ENCODE measurements at regions of chr7 and their contacts with region 1.

Region 1: GRCh38 chr7:101363734-101364374 is 1.2 kb downstream of the COL26A1 start:
- DNase-seq: peak; percentile 39 to 85 (median 60)
- ATAC-seq: peak; percentile 90
- H3K4me3 ChIP-seq: peak overlapping the region; percentile 48
- H3K4me3 Mint-ChIP-seq: peak overlapping the region; percentile 60
- H3K27ac ChIP-seq: no peak overlapping the region
- H3K27ac Mint-ChIP-seq: no peak overlapping the region
- H3K4me1 ChIP-seq: peaks cover 14% of the 10 kb centered on the region
- H3K4me1 Mint-ChIP-seq: no peaks in the 10 kb centered on the region
- H3K27me3 ChIP-seq: peaks cover 12 to 13% of the 10 kb centered on the region in 2 experiments
- H3K27me3 Mint-ChIP-seq: peaks cover 42% of the 10 kb centered on the region
- CTCF ChIP-seq: peak; percentile 90

Region 2: GRCh38 chr7:101308245-101309085 is 55.4 kb before region 1 on chr7:
- CTCF ChIA-PET with region 1: no interaction called
- POLR2A ChIA-PET with region 1: no interaction called
- intact Hi-C with region 1: loop called in 1 of 2 experiments (anchors 10 kb)
- DNase-seq: peak in 7 of 14 experiments; percentile 4 to 40 (median 9)
- ATAC-seq: peak; percentile 39
- H3K4me3 ChIP-seq: peak overlapping the region; percentile 32
- H3K4me3 Mint-ChIP-seq: peak overlapping the region; percentile 84
- H3K27ac ChIP-seq: no peak overlapping the region
- H3K27ac Mint-ChIP-seq: no peak overlapping the region
- H3K4me1 ChIP-seq: peaks cover 14% of the 10 kb centered on the region
- H3K4me1 Mint-ChIP-seq: peaks cover 6% of the 10 kb centered on the region
- H3K27me3 ChIP-seq: peaks cover 44% of the 10 kb centered on the region in 2 experiments
- H3K27me3 Mint-ChIP-seq: peaks cover 54% of the 10 kb centered on the region
- CTCF ChIP-seq: no peak

Region 3: GRCh38 chr7:101321491-101322401 is 42.1 kb before region 1 on chr7 and contains the start of gene IFT22:
- CTCF ChIA-PET with region 1: no interaction called
- POLR2A ChIA-PET with region 1: no interaction called
- intact Hi-C with region 1: no loop called
- DNase-seq: peak; percentile 62 to 91 (median 81)
- ATAC-seq: peak; percentile 91
- H3K4me3 ChIP-seq: peak within 1 kb of the TSS; percentile 71
- H3K4me3 Mint-ChIP-seq: peak within 1 kb of the TSS; percentile 92
- H3K27ac ChIP-seq: peak within 1 kb of the TSS in 1 of 2 donors; percentile 58
- H3K27ac Mint-ChIP-seq: peak within 1 kb of the TSS; percentile 76
- H3K4me1 ChIP-seq: peaks cover 17% of the 10 kb centered on the region
- H3K4me1 Mint-ChIP-seq: peaks cover 18% of the 10 kb centered on the region
- H3K27me3 ChIP-seq: no peaks in the 10 kb centered on the region
- H3K27me3 Mint-ChIP-seq: no peaks in the 10 kb centered on the region
- CTCF ChIP-seq: no peak
- total RNA-seq, gene IFT22: 2.7 to 3.3 TPM

Region 4: DNA sequence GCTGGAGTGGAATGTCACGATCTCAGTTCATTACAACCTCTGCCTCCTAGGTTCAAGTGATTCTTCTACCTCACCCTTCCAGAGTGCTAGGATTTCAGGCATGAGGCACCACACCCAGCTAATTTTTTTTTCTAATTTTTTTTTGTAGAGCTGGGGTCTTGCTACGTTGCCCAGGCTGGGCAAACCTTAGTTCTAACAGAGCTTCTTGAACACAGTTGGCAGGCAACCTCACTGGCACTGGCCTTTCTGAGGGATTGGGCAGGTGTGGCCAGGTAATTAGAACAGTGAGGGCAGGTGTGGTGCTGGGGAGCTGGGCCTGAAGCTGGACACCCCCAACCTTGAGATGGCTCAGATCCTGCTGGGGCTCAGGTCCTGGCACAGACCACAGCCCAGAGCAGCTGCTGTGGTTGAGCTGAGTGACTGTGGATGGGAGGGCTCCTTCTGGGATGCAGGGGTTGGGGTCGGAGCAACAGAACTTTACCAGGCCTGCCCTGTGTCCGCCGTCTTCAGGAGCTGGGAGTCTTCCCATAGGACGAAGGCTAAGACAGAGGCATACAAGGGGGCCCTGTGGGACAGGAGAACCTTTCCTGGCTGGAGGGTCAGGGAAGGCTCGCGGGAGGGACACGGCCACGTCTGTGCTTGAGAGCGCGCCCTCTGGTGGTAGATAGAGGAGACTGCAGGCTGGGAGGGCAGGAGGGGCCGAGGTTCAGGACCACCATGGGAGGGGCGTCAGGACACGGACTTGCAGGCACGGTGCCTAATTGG is 47.1 kb after region 1 on chr7:
- CTCF ChIA-PET with region 1: no interaction called
- POLR2A ChIA-PET with region 1: no interaction called
- intact Hi-C with region 1: loop called (anchors 1 kb)
- DNase-seq: peak; percentile 5 to 64 (median 21)
- ATAC-seq: no peak
- H3K4me3 ChIP-seq: no peak overlapping the region
- H3K4me3 Mint-ChIP-seq: no peak overlapping the region
- H3K27ac ChIP-seq: no peak overlapping the region
- H3K27ac Mint-ChIP-seq: no peak overlapping the region
- H3K4me1 ChIP-seq: peaks cover 6% of the 10 kb centered on the region
- H3K4me1 Mint-ChIP-seq: peaks cover 7% of the 10 kb centered on the region
- H3K27me3 ChIP-seq: no peaks in the 10 kb centered on the region
- H3K27me3 Mint-ChIP-seq: peaks cover 17% of the 10 kb centered on the region
- CTCF ChIP-seq: peak; percentile 90

Region 5: DNA sequence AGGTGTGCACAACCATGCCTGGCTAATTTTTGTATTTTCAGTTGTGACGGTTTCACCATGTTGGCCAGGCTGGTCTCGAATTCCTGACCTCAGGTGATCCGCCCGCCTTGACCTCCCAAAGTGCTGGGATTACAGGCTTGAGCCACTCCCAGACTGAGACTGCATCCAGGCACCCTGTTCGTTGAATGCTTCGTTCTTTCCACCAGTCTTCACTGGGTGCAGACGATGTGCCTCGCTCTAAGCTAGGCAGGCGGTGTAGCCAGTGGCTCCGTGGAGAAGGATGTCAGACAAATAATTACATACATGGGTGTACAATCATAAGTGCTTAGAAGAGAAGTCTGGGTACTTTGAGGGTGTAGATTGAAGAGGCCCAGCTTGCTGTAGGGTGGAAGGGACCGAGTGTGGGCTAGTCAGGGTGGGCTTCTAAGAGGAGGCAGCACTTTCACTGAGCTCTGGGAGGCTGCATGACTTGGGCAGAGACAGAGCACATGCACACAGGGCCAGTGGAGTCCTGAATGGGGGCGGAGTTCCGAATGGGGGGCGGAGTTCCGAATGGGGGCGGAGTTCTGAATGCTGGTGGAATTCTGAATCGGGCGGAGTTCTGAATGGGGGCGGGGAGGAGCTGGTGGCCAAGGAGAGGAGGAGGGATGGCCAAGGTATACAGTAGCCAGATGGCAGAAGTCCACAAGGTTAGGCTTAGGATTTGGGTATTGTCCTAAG is 73.2 kb after region 1 on chr7:
- CTCF ChIA-PET with region 1: interaction called, 5 read pairs
- POLR2A ChIA-PET with region 1: interaction called, 3 read pairs
- intact Hi-C with region 1: loop called (anchors 1 kb)
- DNase-seq: no peak
- ATAC-seq: no peak
- H3K4me3 ChIP-seq: no peak overlapping the region
- H3K4me3 Mint-ChIP-seq: no peak overlapping the region
- H3K27ac ChIP-seq: no peak overlapping the region
- H3K27ac Mint-ChIP-seq: no peak overlapping the region
- H3K4me1 ChIP-seq: no peaks in the 10 kb centered on the region
- H3K4me1 Mint-ChIP-seq: no peaks in the 10 kb centered on the region
- H3K27me3 ChIP-seq: peaks cover 4 to 13% of the 10 kb centered on the region in 2 experiments
- H3K27me3 Mint-ChIP-seq: peaks cover 36% of the 10 kb centered on the region
- CTCF ChIP-seq: no peak

Region 6: GRCh38 chr7:101507791-101508252 is 144.0 kb after region 1 on chr7:
- CTCF ChIA-PET with region 1: interaction called, 3 read pairs
- POLR2A ChIA-PET with region 1: no interaction called
- intact Hi-C with region 1: loop called (anchors 2 to 5 kb)
- DNase-seq: peak in 7 of 14 experiments; percentile 1 to 56 (median 30)
- ATAC-seq: no peak
- H3K4me3 ChIP-seq: no peak overlapping the region
- H3K4me3 Mint-ChIP-seq: no peak overlapping the region
- H3K27ac ChIP-seq: no peak overlapping the region
- H3K27ac Mint-ChIP-seq: no peak overlapping the region
- H3K4me1 ChIP-seq: peaks cover 4% of the 10 kb centered on the region
- H3K4me1 Mint-ChIP-seq: peaks cover 4% of the 10 kb centered on the region
- H3K27me3 ChIP-seq: peaks cover 0 to 3% of the 10 kb centered on the region in 2 experiments
- H3K27me3 Mint-ChIP-seq: peaks cover 10% of the 10 kb centered on the region
- CTCF ChIP-seq: peak; percentile 59

Region 7: DNA sequence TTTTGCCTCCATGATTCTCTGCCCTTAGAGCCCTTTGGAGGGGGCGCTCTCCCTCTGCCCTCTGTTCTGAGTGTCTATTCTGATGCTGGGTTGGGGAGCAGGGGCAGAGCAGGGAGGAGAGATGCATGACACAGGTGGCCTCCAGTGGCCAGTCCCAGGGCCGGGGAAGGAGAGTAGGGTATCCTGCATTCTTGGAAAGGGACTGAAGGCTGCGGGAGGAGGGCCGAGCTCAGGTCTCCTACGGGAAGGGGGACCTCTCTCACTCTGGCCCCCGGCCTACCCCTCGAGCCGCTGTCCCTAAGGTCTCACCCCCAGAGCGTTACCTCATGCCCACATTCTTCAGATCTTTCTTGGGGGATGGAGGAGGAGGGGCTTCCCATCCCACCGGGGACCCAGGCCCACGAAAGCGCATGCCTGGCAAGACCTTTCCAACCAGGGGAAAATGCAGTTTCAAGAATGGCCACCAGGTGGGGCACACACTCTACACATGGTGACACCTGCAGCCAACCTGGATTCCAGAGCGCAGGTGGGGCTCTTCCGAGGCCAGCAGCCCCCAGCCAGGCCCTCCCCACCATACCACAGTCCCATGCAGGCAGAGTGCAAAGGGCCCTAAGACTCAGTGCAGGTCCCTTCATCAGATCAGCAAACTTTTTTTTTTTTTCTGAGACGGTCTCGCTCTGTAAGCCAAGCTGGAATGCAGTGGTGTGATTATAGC is 178.8 kb after region 1 on chr7:
- CTCF ChIA-PET with region 1: no interaction called
- POLR2A ChIA-PET with region 1: interaction called, 4 read pairs
- intact Hi-C with region 1: loop called (anchors 1 to 5 kb)
- DNase-seq: peak; percentile 61 to 81 (median 72)
- ATAC-seq: peak; percentile 49
- H3K4me3 ChIP-seq: no peak overlapping the region
- H3K4me3 Mint-ChIP-seq: no peak overlapping the region
- H3K27ac ChIP-seq: no peak overlapping the region
- H3K27ac Mint-ChIP-seq: no peak overlapping the region
- H3K4me1 ChIP-seq: peaks cover 4% of the 10 kb centered on the region
- H3K4me1 Mint-ChIP-seq: no peaks in the 10 kb centered on the region
- H3K27me3 ChIP-seq: peaks cover 0 to 3% of the 10 kb centered on the region in 2 experiments
- H3K27me3 Mint-ChIP-seq: peaks cover 4% of the 10 kb centered on the region
- CTCF ChIP-seq: peak; percentile 88

Region 8: GRCh38 chr7:101815835-101816493 is 452.1 kb after region 1 on chr7:
- CTCF ChIA-PET with region 1: no interaction called
- POLR2A ChIA-PET with region 1: no interaction called
- intact Hi-C with region 1: no loop called
- DNase-seq: peak; percentile 48 to 89 (median 64)
- ATAC-seq: peak; percentile 81
- H3K4me3 ChIP-seq: peak overlapping the region; percentile 57
- H3K4me3 Mint-ChIP-seq: peak overlapping the region; percentile 90
- H3K27ac ChIP-seq: no peak overlapping the region
- H3K27ac Mint-ChIP-seq: peak overlapping the region; percentile 51
- H3K4me1 ChIP-seq: peaks cover 16% of the 10 kb centered on the region
- H3K4me1 Mint-ChIP-seq: peaks cover 35% of the 10 kb centered on the region
- H3K27me3 ChIP-seq: no peaks in the 10 kb centered on the region
- H3K27me3 Mint-ChIP-seq: peaks cover 5% of the 10 kb centered on the region
- CTCF ChIP-seq: no peak

Region 9: DNA sequence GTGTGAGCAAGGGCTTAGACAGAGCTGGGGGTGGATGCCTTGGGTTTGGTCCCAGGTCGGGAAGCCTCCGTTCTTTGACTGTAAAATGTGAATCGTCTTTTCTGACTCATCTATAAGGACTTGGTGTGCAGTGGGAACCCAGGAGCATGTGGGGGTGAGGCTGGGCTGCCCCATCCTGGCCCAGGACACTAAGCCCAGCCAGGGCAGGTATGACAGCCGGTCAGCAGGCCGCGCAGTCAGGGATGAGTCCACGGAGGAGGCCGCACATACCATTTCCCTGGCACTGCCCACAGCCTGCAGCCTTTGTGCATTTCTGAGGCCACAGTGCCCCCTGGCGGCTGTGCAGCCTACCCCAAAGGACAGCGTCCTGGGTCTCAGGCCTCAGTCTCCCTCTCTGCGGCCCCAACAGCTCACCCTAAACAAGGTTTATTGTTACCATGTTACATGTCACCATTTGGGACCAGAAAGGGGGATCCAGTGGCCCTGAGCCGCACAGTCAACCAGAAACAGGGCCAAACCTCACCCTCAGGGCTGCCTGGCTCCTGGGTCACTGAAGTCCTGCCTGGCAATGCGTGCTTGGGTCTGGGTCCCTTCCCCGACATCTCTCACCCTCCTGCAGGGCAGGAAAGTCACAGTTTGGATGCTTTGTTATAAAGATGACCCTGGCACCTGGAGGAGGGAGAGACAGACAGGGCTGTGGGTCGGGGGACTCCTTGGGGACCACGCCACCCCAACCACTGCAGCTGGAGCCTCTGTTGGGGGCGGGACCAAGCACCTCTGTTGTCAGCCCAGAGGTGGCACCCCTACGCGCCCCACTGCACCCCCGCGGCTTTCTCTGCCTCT is 908.4 kb after region 1 on chr7:
- CTCF ChIA-PET with region 1: no interaction called
- POLR2A ChIA-PET with region 1: no interaction called
- intact Hi-C with region 1: loop called in 1 of 2 experiments (anchors 5 kb)
- DNase-seq: peak; percentile 61 to 84 (median 72)
- ATAC-seq: peak; percentile 68
- H3K4me3 ChIP-seq: no peak overlapping the region
- H3K4me3 Mint-ChIP-seq: no peak overlapping the region
- H3K27ac ChIP-seq: no peak overlapping the region
- H3K27ac Mint-ChIP-seq: no peak overlapping the region
- H3K4me1 ChIP-seq: peaks cover 4% of the 10 kb centered on the region
- H3K4me1 Mint-ChIP-seq: no peaks in the 10 kb centered on the region
- H3K27me3 ChIP-seq: no peaks in the 10 kb centered on the region
- H3K27me3 Mint-ChIP-seq: no peaks in the 10 kb centered on the region
- CTCF ChIP-seq: peak; percentile 94

Measured in CD4-positive, alpha-beta T cell (primary cell).